SK-N-SH (cell line): ENCODE measurements at regions of chr18 and their contacts with region 1.

Region 1: GRCh38 chr18:13159579-13159978 is 59.0 kb upstream of the LDLRAD4 start:
- DNase-seq: peak; percentile 73
- H3K4me3 ChIP-seq: peak overlapping the region in 1 of 2 experiments; percentile 39; a peak in 1 of 4 replicates
- H3K27ac ChIP-seq: no peak overlapping the region
- H3K4me1 ChIP-seq: no peaks in the 10 kb centered on the region; a peak in 1 of 4 replicates
- H3K27me3 ChIP-seq: no peaks in the 10 kb centered on the region
- CTCF ChIP-seq: peak; percentile 77
- EP300 ChIP-seq: no peak
- RAD21 ChIP-seq: peak; percentile 78

Region 2: GRCh38 chr18:13112982-13113381 is 46.6 kb before region 1 on chr18:
- CTCF ChIA-PET with region 1: interaction called, 59 read pairs
- POLR2A ChIA-PET with region 1: interaction called, 4 read pairs
- DNase-seq: peak; percentile 84
- H3K4me3 ChIP-seq: no peak overlapping the region
- H3K27ac ChIP-seq: peak overlapping the region in 1 of 2 experiments; percentile 76; a peak in 2 of 4 replicates
- H3K4me1 ChIP-seq: peaks cover 0 to 11% of the 10 kb centered on the region in 2 experiments; a peak in 1 of 4 replicates
- H3K27me3 ChIP-seq: no peaks in the 10 kb centered on the region
- CTCF ChIP-seq: peak; percentile 49
- EP300 ChIP-seq: no peak; a peak in 1 of 4 replicates
- RAD21 ChIP-seq: peak; percentile 86

Region 3: GRCh38 chr18:13173578-13174145 is 14.1 kb after region 1 on chr18:
- CTCF ChIA-PET with region 1: interaction called, 11 read pairs
- POLR2A ChIA-PET with region 1: no interaction called
- DNase-seq: no peak
- H3K4me3 ChIP-seq: no peak overlapping the region
- H3K27ac ChIP-seq: no peak overlapping the region
- H3K4me1 ChIP-seq: peaks cover 0 to 4% of the 10 kb centered on the region in 2 experiments; a peak in 1 of 4 replicates
- H3K27me3 ChIP-seq: no peaks in the 10 kb centered on the region
- CTCF ChIP-seq: no peak
- EP300 ChIP-seq: no peak
- RAD21 ChIP-seq: no peak

Region 4: DNA sequence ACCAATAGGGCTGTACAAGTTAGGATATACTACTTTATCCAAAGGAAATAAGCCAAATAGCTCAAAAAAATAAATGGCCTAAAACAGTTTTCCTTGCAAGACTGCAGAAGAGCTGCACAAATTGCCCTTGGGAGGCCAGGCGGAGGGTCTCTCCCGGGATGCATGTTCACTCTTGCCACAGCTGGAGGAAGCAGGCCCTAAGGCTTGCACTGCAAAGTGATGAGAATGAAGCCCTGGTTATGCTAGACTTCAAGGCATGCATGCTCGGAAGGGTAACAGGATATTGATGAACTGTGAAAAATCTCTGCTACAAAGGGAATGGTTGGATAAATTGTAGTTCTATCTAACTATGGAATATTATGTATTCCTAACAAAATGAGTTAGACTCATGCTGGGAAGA is 31.5 kb after region 1 on chr18:
- CTCF ChIA-PET with region 1: interaction called, 10 read pairs
- POLR2A ChIA-PET with region 1: no interaction called
- DNase-seq: no peak
- H3K4me3 ChIP-seq: no peak overlapping the region
- H3K27ac ChIP-seq: no peak overlapping the region
- H3K4me1 ChIP-seq: peaks cover 0 to 3% of the 10 kb centered on the region in 2 experiments; a peak in 1 of 4 replicates
- H3K27me3 ChIP-seq: no peaks in the 10 kb centered on the region; the same call in 1 of the 2 replicates
- CTCF ChIP-seq: no peak
- EP300 ChIP-seq: no peak
- RAD21 ChIP-seq: no peak

Region 5: GRCh38 chr18:13318731-13319501 is 159.3 kb after region 1 on chr18:
- CTCF ChIA-PET with region 1: no interaction called
- POLR2A ChIA-PET with region 1: no interaction called
- DNase-seq: no peak
- H3K4me3 ChIP-seq: no peak overlapping the region
- H3K27ac ChIP-seq: no peak overlapping the region; a peak in 1 of 4 replicates
- H3K4me1 ChIP-seq: peaks cover 0 to 8% of the 10 kb centered on the region in 2 experiments; a peak in 1 of 4 replicates
- H3K27me3 ChIP-seq: no peaks in the 10 kb centered on the region
- CTCF ChIP-seq: no peak
- EP300 ChIP-seq: no peak
- RAD21 ChIP-seq: no peak